BJ (cell line): ENCODE measurements at regions of chr10 and their contacts with region 1.

Region 1: GRCh38 chr10:95693668-95694534 is at the start of gene TCTN3:
- DNase-seq: peak; percentile 98
- H3K4me3 ChIP-seq: peak within 1 kb of the TSS; percentile 83
- H3K27me3 ChIP-seq: no peaks in the 10 kb centered on the region
- CTCF ChIP-seq: peak; percentile 100
- polyA plus RNA-seq, gene TCTN3: 38.0 and 48.6 TPM in 2 replicates

Region 2: GRCh38 chr10:95675403-95676112 is 18.3 kb before region 1 on chr10:
- CTCF ChIA-PET with region 1: interaction called, 16 read pairs
- POLR2A ChIA-PET with region 1: no interaction called
- DNase-seq: no peak
- H3K4me3 ChIP-seq: no peak overlapping the region
- H3K27me3 ChIP-seq: no peaks in the 10 kb centered on the region
- CTCF ChIP-seq: no peak

Region 3: GRCh38 chr10:95815701-95816240 is 121.9 kb after region 1 on chr10:
- CTCF ChIA-PET with region 1: interaction called, 13 read pairs
- POLR2A ChIA-PET with region 1: no interaction called
- DNase-seq: no peak
- H3K4me3 ChIP-seq: no peak overlapping the region
- H3K27me3 ChIP-seq: no peaks in the 10 kb centered on the region
- CTCF ChIP-seq: no peak

Region 4: GRCh38 chr10:95841661-95842498 is 148.0 kb after region 1 on chr10:
- CTCF ChIA-PET with region 1: interaction called, 296 read pairs
- POLR2A ChIA-PET with region 1: interaction called, 3 read pairs
- DNase-seq: no peak
- H3K4me3 ChIP-seq: no peak overlapping the region
- H3K27me3 ChIP-seq: no peaks in the 10 kb centered on the region; the same call in 1 of the 2 replicates
- CTCF ChIP-seq: peak; percentile 50

Region 5: DNA sequence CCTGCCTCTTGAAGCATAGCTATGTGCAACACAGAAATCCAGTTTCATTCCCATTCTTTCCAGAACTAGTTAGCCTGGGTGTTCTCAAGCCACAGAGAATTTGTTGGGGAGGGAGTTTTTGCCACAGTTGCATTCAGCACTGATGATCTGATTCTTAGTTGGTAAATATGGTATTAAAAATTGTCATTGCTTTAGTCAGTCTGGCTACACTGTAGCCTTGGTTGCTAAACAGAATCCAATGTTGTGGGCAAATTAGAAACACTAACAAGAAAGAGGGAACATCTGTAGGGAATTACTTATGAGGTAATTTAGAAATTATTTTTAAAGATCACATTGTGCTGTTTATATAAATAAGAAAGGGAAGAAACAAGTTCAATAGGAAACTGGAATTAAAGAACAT is 156.9 kb after region 1 on chr10:
- CTCF ChIA-PET with region 1: interaction called, 296 read pairs
- POLR2A ChIA-PET with region 1: no interaction called
- DNase-seq: no peak
- H3K4me3 ChIP-seq: no peak overlapping the region
- H3K27me3 ChIP-seq: no peaks in the 10 kb centered on the region
- CTCF ChIP-seq: no peak

Region 6: DNA sequence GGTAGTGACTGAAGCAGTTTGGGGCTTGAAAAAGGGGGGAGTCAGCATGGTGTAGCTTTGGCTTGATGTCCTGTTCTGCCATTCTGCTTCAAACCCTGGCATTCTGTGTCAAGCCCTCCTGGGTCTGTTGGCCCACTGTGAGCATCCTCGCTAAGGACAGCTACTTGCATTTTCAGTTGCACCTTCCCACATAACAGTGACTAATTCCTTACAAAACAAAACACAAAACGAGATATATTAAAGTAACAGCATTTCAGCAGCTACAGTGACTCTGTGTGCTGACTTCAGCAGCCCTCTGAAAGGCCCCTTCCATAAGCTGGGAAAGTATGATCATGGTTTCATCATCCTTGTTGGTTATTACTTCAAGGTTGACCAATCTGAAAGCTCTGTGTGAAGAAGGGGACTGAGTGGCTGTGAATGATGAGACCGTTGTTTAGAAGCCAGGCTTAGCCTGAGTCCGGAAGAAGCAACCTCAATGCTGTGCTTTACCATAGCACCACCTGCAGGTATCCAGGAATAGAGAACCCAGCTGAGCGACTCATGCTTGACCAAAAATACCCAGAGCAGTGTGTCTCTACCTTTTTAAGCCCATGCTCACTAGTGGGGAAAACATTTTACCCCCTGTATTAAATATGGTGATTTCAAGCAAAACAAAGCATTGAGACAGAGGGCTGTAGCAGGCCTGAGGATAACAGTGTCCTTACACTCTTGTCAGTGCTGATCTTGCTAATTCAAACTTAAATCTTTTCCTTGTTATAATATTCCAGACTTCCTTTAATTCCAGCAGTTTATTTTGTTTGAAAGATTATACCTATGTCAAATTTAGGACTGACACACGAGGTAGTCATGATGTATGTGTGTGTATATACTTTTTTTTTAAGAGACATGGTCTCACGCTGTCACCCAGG is 171.3 kb after region 1 on chr10:
- CTCF ChIA-PET with region 1: interaction called, 51 read pairs
- POLR2A ChIA-PET with region 1: no interaction called
- DNase-seq: peak; percentile 35
- H3K4me3 ChIP-seq: no peak overlapping the region
- H3K27me3 ChIP-seq: no peaks in the 10 kb centered on the region
- CTCF ChIP-seq: peak; percentile 81